ENCODE measurements at regions of chr10 and their contacts with region 1.

Region 1: DNA sequence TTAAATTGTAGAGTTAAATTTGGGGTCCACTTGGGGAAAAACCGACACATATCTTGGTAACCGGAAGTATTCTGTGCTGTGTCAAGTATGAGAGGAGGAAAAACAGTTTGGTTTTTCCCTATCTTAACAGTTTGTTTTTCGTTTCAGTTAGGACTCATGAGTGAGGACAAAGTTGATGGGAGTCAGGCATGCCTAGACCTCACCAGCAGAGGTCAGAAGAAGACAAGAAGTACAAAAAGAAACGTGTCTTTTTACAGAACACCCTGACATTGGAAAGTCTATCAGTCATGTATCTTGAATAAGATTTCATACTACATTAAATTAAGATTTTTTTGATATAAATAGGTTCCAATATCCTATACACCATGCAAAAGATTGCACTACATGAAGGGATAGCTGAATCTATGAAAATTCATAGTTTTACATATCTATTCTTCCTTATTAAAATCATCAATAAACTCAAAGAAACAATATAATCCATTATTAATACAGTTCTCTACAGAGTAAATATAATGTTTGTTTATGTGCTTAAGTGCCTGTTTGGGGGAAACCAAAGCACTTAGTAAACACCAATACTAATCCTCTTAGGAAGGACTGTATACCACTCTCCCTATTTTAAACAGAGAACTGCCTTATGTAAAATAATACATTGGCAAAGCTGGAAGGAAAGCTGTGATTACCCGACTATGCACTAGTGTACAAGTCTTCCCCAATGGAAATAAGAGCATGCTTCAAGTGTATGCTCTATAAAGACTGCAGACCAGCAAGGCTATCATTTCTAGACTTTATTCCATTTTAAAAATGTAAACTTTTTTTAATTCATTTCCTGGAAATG is 95.6 kb downstream of the USP6NL start:
- DNase-seq: peak; percentile 4 to 31
- ATAC-seq: peak; percentile 87 to 88
- H3K4me3 ChIP-seq: no peak overlapping the region
- H3K27ac ChIP-seq: no peak overlapping the region
- H3K4me1 ChIP-seq: no peaks in the 10 kb centered on the region
- H3K27me3 ChIP-seq: no peaks in the 10 kb centered on the region
- CTCF ChIP-seq: peak; percentile 65 to 78 (median 73)
- POLR2A ChIP-seq: no peak

Region 2: DNA sequence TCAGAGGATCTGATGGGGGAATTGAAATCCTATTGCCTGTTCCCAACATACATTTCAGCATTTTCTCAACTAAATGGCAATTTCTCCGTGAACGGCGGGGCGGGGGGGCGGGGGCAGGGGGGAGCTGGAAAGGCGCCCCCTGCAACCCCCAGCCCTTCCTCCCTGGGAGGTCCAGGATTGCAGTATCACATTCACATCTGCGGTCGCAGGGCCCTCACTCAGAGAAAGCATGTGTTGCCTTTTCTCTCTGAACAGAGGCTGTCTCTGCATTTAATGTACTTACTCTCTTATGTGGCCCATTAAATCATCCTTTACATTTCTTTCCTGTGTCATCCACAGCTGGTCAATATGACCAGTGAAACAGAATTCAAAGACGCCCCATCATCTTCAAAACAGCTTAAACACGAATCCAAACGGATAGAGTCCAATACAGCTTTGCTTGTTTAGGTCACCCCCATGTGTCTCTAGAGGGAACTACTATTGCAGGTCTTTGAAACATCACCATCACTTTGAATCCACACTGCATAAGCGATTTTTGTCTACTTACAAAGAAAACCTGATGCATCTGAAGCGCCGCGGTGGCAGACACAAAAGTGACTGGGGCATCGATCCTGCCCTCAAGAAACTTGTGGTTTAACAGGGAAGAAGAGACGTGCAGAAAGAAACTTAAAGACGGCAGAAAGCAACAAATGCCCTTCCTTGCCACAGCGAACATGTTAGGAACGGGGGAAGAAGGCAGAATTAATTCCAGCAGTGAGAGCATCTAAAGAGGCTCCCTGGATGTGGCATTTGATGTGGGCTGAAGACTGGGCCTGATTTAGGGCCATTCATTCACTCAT is 209.3 kb after region 1 on chr10:
- in situ Hi-C with region 1: loop called in 1 of 4 experiments (anchors 10 kb)
- intact Hi-C with region 1: no loop called
- DNase-seq: no peak
- ATAC-seq: no peak
- H3K4me3 ChIP-seq: no peak overlapping the region
- H3K27ac ChIP-seq: no peak overlapping the region
- H3K4me1 ChIP-seq: no peaks in the 10 kb centered on the region
- H3K27me3 ChIP-seq: no peaks in the 10 kb centered on the region
- CTCF ChIP-seq: peak in 3 of 5 experiments; percentile 33 to 49 (median 33)
- POLR2A ChIP-seq: no peak

Region 3: GRCh38 chr10:11823122-11823988 is 307.5 kb after region 1 on chr10 and contains the start of gene PROSER2:
- in situ Hi-C with region 1: no loop called
- intact Hi-C with region 1: loop called (anchors 1 kb)
- DNase-seq: no peak
- ATAC-seq: peak; percentile 55 to 64
- H3K4me3 ChIP-seq: peak within 1 kb of the TSS; percentile 49 to 59 (median 54)
- H3K27ac ChIP-seq: peak within 1 kb of the TSS in 2 of 4 donors; percentile 38 to 45
- H3K4me1 ChIP-seq: no peaks in the 10 kb centered on the region
- H3K27me3 ChIP-seq: peaks cover 6 to 18% (median 15%) of the 10 kb centered on the region in 3 donors
- CTCF ChIP-seq: no peak
- POLR2A ChIP-seq: peak in 1 of 2 donors; percentile 48
- total RNA-seq, gene PROSER2: 0.88 to 3.4 (median 1.4) TPM

Region 4: GRCh38 chr10:11986593-11987216 is 470.9 kb after region 1 on chr10:
- in situ Hi-C with region 1: loop called in 2 of 4 experiments (anchors 10 to 25 kb)
- intact Hi-C with region 1: loop called (anchors 10 kb)
- DNase-seq: peak; percentile 10 to 41
- ATAC-seq: peak in 1 of 2 donors; percentile 53
- H3K4me3 ChIP-seq: no peak overlapping the region
- H3K27ac ChIP-seq: no peak overlapping the region
- H3K4me1 ChIP-seq: peaks cover 0 to 3% of the 10 kb centered on the region in 2 donors
- H3K27me3 ChIP-seq: no peaks in the 10 kb centered on the region
- CTCF ChIP-seq: peak; percentile 50 to 82 (median 53)
- POLR2A ChIP-seq: no peak

Measured in gastrocnemius medialis (tissue), 4 donors.